ENCODE measurements at regions of chr12 and their contacts with region 1.

Region 1: GRCh38 chr12:110704748-110705147 is 15.8 kb upstream of the HVCN1 start:
- DNase-seq: no peak
- H3K4me3 ChIP-seq: no peak overlapping the region
- H3K27ac ChIP-seq: no peak overlapping the region
- H3K4me1 ChIP-seq: no peaks in the 10 kb centered on the region
- H3K27me3 ChIP-seq: no peaks in the 10 kb centered on the region
- CTCF ChIP-seq: peak; percentile 58; the same call in 1 of the 2 replicates

Region 2: GRCh38 chr12:110134691-110135411 is 569.9 kb before region 1 on chr12:
- CTCF ChIA-PET with region 1: interaction called, 14 read pairs
- POLR2A ChIA-PET with region 1: no interaction called
- intact Hi-C with region 1: no loop called
- DNase-seq: no peak
- H3K4me3 ChIP-seq: no peak overlapping the region
- H3K27ac ChIP-seq: no peak overlapping the region
- H3K4me1 ChIP-seq: no peaks in the 10 kb centered on the region
- H3K27me3 ChIP-seq: no peaks in the 10 kb centered on the region
- CTCF ChIP-seq: no peak

Region 3: GRCh38 chr12:110501752-110502738 is 202.7 kb before region 1 on chr12 and contains the starts of genes RAD9B and VPS29:
- CTCF ChIA-PET with region 1: no interaction called
- POLR2A ChIA-PET with region 1: interaction called, 11 read pairs
- intact Hi-C with region 1: no loop called
- DNase-seq: peak; percentile 95 to 96
- H3K4me3 ChIP-seq: peak within 1 kb of the TSS; percentile 79
- H3K27ac ChIP-seq: peak within 1 kb of the TSS; percentile 85
- H3K4me1 ChIP-seq: peaks cover 22% of the 10 kb centered on the region
- H3K27me3 ChIP-seq: no peaks in the 10 kb centered on the region
- CTCF ChIP-seq: no peak
- total RNA-seq, gene RAD9B: 1.6 and 2.3 TPM in 2 replicates
- total RNA-seq, gene VPS29: 78.3 and 114 TPM in 2 replicates

Region 4: DNA sequence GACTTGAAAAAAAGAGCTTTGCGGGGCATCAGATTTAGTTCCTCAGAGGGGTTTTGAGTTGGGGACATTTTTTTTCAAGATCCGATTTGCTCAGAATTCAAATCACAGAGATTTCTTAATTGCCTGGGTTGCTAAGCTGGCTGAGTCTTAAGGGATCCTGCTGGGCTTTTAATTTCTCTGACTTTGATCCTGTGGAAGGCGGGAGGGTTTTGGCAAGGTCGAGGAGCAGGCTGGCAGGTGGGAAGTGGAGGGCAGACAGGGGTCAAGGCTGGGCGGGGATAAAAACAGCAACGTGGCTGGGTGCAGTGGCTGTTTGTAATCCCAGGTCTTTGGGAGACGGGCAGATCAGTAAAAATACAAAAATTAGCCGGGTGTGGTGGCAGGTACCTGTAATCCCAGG is 108.5 kb after region 1 on chr12:
- CTCF ChIA-PET with region 1: no interaction called
- POLR2A ChIA-PET with region 1: no interaction called
- intact Hi-C with region 1: no loop called
- DNase-seq: no peak
- H3K4me3 ChIP-seq: no peak overlapping the region
- H3K27ac ChIP-seq: no peak overlapping the region
- H3K4me1 ChIP-seq: peaks cover 9% of the 10 kb centered on the region; the same call in 1 of the 2 replicates
- H3K27me3 ChIP-seq: peaks cover 10% of the 10 kb centered on the region; the same call in 1 of the 2 replicates
- CTCF ChIP-seq: no peak

Region 5: DNA sequence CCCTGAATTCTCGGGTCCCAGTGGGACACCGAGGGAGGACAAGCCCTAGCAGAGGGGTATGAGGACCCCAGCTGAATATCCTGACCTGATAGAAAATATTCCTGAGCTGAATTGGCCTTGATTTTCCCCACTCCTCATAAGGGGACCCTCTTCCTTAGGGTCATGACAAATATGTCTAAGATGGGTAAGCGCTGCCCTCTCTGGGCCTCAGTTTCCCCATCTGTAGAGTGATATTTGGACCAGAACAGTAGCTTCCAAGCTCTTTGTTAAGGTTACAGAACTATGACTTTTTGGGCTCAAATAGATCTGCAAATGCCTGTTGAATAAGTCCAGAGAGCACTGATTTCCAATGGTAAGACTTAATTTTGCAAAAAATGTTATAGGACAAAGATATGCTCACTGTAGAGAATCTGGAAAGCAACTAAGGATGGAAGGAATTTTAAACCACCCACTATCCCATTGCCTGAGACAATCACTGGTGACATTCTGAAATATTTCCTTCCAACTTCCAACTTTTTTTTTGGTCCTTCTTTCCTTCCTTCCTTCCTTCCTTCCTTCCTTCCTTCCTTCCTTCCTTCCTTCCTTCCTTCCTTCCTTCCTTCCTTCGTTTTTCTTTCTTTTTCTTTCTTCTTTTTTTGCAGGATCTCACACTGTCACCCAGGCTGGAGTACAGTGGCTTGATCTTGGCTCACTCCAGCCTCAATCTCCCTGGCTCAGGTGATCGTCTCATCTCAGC is 183.7 kb after region 1 on chr12:
- CTCF ChIA-PET with region 1: no interaction called
- POLR2A ChIA-PET with region 1: no interaction called
- intact Hi-C with region 1: loop called (anchors 5 kb)
- DNase-seq: no peak
- H3K4me3 ChIP-seq: peak overlapping the region; percentile 65
- H3K27ac ChIP-seq: no peak overlapping the region
- H3K4me1 ChIP-seq: no peaks in the 10 kb centered on the region
- H3K27me3 ChIP-seq: peaks cover 3% of the 10 kb centered on the region; the same call in 1 of the 2 replicates
- CTCF ChIP-seq: peak; percentile 66; the same call in 1 of the 2 replicates

Region 6: GRCh38 chr12:111467092-111467856 is 762.5 kb after region 1 on chr12:
- CTCF ChIA-PET with region 1: interaction called, 17 read pairs
- POLR2A ChIA-PET with region 1: no interaction called
- intact Hi-C with region 1: no loop called
- DNase-seq: no peak
- H3K4me3 ChIP-seq: no peak overlapping the region
- H3K27ac ChIP-seq: peak overlapping the region; percentile 28; the same call in 1 of the 2 replicates
- H3K4me1 ChIP-seq: no peaks in the 10 kb centered on the region
- H3K27me3 ChIP-seq: no peaks in the 10 kb centered on the region
- CTCF ChIP-seq: no peak

Measured in PC-9 (cell line).